Caco-2 (cell line): ENCODE measurements at regions of chr16 and their contacts with region 1.

Region 1: DNA sequence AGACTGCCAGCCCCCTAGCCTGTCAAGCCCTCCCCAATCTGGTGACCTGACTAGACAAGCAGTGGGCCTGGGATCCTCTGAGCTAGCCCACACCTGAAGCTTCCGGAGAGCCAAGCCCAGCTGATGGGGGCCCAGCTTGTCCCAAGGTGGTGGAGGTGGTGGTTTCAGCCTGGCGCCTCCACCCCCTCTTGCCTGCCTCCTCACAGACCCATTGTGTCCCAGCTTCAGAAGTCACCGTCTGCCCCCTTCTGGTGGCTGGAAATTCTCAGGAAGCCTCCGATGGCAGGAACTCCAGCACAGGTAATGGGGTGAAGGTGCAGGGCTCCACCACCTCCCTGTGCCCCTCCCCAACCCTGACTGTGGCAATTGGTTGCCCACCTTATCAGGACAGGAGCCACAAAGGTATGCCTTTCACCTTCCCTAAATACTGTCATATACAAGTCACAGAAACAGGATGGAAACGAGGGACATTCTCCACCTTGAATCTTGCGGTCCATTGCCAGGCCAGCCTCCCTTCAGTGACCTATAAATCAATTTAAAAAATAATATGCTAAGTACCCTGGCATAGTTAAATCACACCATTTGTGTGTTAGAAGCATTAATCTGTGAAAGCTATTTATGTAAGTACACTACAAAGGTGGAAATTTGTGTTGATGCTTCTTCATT is 66.0 kb upstream of the ZNF423 start:
- DNase-seq: peak; percentile 83 to 88
- H3K4me3 ChIP-seq: no peak overlapping the region
- H3K4me3 Mint-ChIP-seq: no peak overlapping the region
- H3K27ac Mint-ChIP-seq: no peak overlapping the region
- H3K4me1 ChIP-seq: 0 out of 2 replicates have a peak, but pooled peaks cover 3% of the 10 kb centered on the region
- H3K4me1 Mint-ChIP-seq: no peaks in the 10 kb centered on the region
- H3K27me3 ChIP-seq: no peaks in the 10 kb centered on the region
- H3K27me3 Mint-ChIP-seq: peaks cover 8% of the 10 kb centered on the region
- CTCF ChIP-seq: peak; percentile 90 to 93

Region 2: GRCh38 chr16:49216593-49216992 is 705.3 kb before region 1 on chr16:
- CTCF ChIA-PET with region 1: no interaction called
- POLR2A ChIA-PET with region 1: no interaction called
- intact Hi-C with region 1: no loop called
- DNase-seq: no peak
- H3K4me3 ChIP-seq: no peak overlapping the region
- H3K4me3 Mint-ChIP-seq: no peak overlapping the region
- H3K27ac Mint-ChIP-seq: no peak overlapping the region
- H3K4me1 ChIP-seq: no peaks in the 10 kb centered on the region
- H3K4me1 Mint-ChIP-seq: no peaks in the 10 kb centered on the region
- H3K27me3 ChIP-seq: no peaks in the 10 kb centered on the region
- H3K27me3 Mint-ChIP-seq: peaks cover 13% of the 10 kb centered on the region
- CTCF ChIP-seq: no peak

Region 3: GRCh38 chr16:49407873-49408550 is 513.9 kb before region 1 on chr16:
- CTCF ChIA-PET with region 1: no interaction called
- POLR2A ChIA-PET with region 1: no interaction called
- intact Hi-C with region 1: loop called (anchors 5 kb)
- DNase-seq: peak; percentile 87 to 89
- H3K4me3 ChIP-seq: no peak overlapping the region
- H3K4me3 Mint-ChIP-seq: no peak overlapping the region
- H3K27ac Mint-ChIP-seq: no peak overlapping the region
- H3K4me1 ChIP-seq: no peaks in the 10 kb centered on the region
- H3K4me1 Mint-ChIP-seq: no peaks in the 10 kb centered on the region
- H3K27me3 ChIP-seq: no peaks in the 10 kb centered on the region
- H3K27me3 Mint-ChIP-seq: peaks cover 9% of the 10 kb centered on the region
- CTCF ChIP-seq: peak; percentile 92 to 97

Region 4: GRCh38 chr16:49556606-49557446 is 365.1 kb before region 1 on chr16:
- CTCF ChIA-PET with region 1: interaction called, 3 read pairs
- POLR2A ChIA-PET with region 1: no interaction called
- intact Hi-C with region 1: loop called (anchors 1 kb)
- DNase-seq: peak in 1 of 2 experiments; percentile 30
- H3K4me3 ChIP-seq: 0 out of 2 replicates have a peak overlapping the region, but pooled peaks have one; percentile 1
- H3K4me3 Mint-ChIP-seq: peak overlapping the region; percentile 33
- H3K27ac Mint-ChIP-seq: no peak overlapping the region
- H3K4me1 ChIP-seq: peaks cover 6% of the 10 kb centered on the region; the same call in 1 of the 2 replicates
- H3K4me1 Mint-ChIP-seq: no peaks in the 10 kb centered on the region
- H3K27me3 ChIP-seq: no peaks in the 10 kb centered on the region; the same call in none of the 2 replicates
- H3K27me3 Mint-ChIP-seq: peaks cover 11% of the 10 kb centered on the region
- CTCF ChIP-seq: peak; percentile 67 to 73

Region 5: DNA sequence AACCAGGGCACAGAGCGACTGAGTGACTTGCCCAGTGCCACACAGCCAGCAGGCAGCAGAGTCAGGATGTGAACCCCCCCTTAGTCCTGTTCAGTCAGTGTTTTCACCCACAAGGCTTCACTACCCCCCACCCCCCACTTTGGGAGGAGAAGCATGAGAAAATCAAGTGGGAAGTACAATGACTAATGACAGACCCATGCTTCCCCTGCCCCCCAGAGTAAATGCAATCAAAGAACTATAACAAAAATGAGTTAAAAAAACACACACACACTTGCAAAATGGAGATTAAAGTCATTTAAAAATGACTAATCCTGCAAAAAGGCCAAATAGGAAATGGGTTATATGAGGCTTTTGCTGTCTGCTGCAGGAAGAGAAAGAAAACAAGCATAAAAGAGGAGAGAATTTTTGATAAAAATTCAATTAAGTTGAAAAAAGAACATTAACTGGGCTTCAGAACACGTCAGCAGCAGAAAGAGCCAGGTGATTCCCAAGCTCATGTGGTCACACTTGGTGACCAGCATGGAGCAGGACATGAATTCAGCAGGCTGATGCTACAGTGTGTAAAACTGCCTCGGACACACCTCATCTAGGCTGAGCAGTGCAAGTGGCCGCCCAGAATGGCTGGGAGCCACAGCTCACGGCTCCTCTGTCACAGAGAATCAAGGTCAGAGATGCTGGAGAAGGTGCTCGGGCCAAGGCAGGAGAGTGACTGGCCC is 278.3 kb before region 1 on chr16:
- CTCF ChIA-PET with region 1: interaction called, 10 read pairs
- POLR2A ChIA-PET with region 1: no interaction called
- intact Hi-C with region 1: no loop called
- DNase-seq: no peak
- H3K4me3 ChIP-seq: no peak overlapping the region
- H3K4me3 Mint-ChIP-seq: no peak overlapping the region
- H3K27ac Mint-ChIP-seq: no peak overlapping the region
- H3K4me1 ChIP-seq: no peaks in the 10 kb centered on the region
- H3K4me1 Mint-ChIP-seq: no peaks in the 10 kb centered on the region
- H3K27me3 ChIP-seq: peaks cover 4% of the 10 kb centered on the region
- H3K27me3 Mint-ChIP-seq: peaks cover 3% of the 10 kb centered on the region
- CTCF ChIP-seq: no peak

Region 6: GRCh38 chr16:49899991-49900695 is 21.8 kb before region 1 on chr16:
- CTCF ChIA-PET with region 1: interaction called, 8 read pairs
- POLR2A ChIA-PET with region 1: interaction called, 5 read pairs
- intact Hi-C with region 1: loop called (anchors 1 kb)
- DNase-seq: peak; percentile 80 to 91
- H3K4me3 ChIP-seq: no peak overlapping the region
- H3K4me3 Mint-ChIP-seq: peak overlapping the region; percentile 12
- H3K27ac Mint-ChIP-seq: peak overlapping the region; percentile 48
- H3K4me1 ChIP-seq: peaks cover 24% of the 10 kb centered on the region
- H3K4me1 Mint-ChIP-seq: peaks cover 28% of the 10 kb centered on the region
- H3K27me3 ChIP-seq: no peaks in the 10 kb centered on the region
- H3K27me3 Mint-ChIP-seq: no peaks in the 10 kb centered on the region
- CTCF ChIP-seq: no peak

Region 7: DNA sequence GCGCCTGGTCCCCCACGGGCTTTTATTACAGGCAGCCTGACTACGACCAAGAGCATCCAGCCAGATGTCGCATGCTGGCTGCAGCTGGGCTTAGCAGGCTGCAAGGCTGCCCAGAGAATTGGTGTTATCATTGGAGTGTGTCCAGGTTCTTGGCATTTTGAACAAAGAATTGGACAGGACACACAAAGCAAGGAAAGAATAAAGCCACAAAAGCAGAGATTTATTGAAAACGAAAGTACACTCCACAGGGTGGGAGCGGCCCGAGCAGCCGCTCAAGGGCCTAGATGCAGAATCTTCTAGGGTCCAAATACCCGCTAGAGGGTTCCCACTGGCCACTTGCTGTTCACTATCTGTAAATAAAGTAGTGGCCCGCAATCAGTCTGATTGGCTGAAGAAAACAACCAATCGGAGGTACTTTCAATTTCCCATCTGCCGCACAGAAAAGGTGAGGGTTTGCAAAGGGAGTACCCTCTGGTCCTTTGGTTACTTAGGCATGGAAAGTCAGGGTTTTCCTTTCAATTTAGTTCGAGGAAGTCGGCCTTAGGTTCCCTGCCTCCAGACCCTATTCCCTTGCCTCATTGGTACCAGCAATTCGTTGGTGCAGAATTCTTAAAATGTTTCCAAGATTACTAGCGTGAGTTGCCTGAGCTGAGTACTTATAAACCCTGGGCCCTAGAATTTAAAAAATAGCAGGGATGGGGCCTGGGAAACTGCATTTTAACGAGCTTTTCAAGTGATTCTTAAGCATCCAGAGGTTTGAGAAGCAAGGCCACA is 64.6 kb after region 1 on chr16:
- CTCF ChIA-PET with region 1: no interaction called
- POLR2A ChIA-PET with region 1: no interaction called
- intact Hi-C with region 1: no loop called
- DNase-seq: no peak
- H3K4me3 ChIP-seq: no peak overlapping the region
- H3K4me3 Mint-ChIP-seq: no peak overlapping the region
- H3K27ac Mint-ChIP-seq: no peak overlapping the region
- H3K4me1 ChIP-seq: no peaks in the 10 kb centered on the region
- H3K4me1 Mint-ChIP-seq: no peaks in the 10 kb centered on the region
- H3K27me3 ChIP-seq: no peaks in the 10 kb centered on the region
- H3K27me3 Mint-ChIP-seq: no peaks in the 10 kb centered on the region
- CTCF ChIP-seq: no peak

Region 8: GRCh38 chr16:50489182-50489581 is 567.3 kb after region 1 on chr16:
- CTCF ChIA-PET with region 1: no interaction called
- POLR2A ChIA-PET with region 1: no interaction called
- intact Hi-C with region 1: no loop called
- DNase-seq: no peak
- H3K4me3 ChIP-seq: no peak overlapping the region
- H3K4me3 Mint-ChIP-seq: no peak overlapping the region
- H3K27ac Mint-ChIP-seq: no peak overlapping the region
- H3K4me1 ChIP-seq: no peaks in the 10 kb centered on the region
- H3K4me1 Mint-ChIP-seq: no peaks in the 10 kb centered on the region
- H3K27me3 ChIP-seq: no peaks in the 10 kb centered on the region
- H3K27me3 Mint-ChIP-seq: no peaks in the 10 kb centered on the region
- CTCF ChIP-seq: no peak